Esophagus muscularis mucosa (tissue), 4 donors: ENCODE measurements at regions of chr9 and their contacts with region 1.

Region 1: GRCh38 chr9:14258660-14259239 is 55.2 kb downstream of the NFIB start:
- DNase-seq: no peak
- H3K4me3 ChIP-seq: no peak overlapping the region
- H3K27ac ChIP-seq: peak overlapping the region; percentile 13 to 73 (median 28)
- H3K4me1 ChIP-seq: peaks cover 41 to 62% (median 57%) of the 10 kb centered on the region in 4 donors
- H3K27me3 ChIP-seq: no peaks in the 10 kb centered on the region
- CTCF ChIP-seq: no peak
- EP300 ChIP-seq: no peak
- POLR2A ChIP-seq: no peak

Region 2: DNA sequence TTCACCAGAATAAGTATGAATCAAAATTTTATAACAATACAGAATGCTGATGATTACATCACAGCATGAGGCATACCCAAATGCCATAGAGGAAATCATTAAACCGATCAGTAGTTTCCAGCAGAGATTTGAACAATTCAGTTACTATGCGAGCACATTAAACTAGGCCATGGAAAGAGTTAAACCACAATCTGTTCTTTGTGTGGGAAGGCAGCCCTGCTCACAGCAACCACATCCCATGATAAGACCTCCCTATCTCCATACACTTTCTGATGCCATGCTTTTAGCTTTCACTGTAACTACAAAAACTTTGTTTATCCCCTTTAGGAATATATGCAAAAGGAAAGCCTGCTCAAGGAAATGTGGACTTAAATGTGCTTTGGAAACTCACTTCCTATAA is 50.7 kb after region 1 on chr9:
- intact Hi-C with region 1: loop called (anchors 5 kb)
- DNase-seq: no peak
- H3K4me3 ChIP-seq: peak overlapping the region; percentile 5 to 88 (median 80)
- H3K27ac ChIP-seq: peak overlapping the region in 1 of 4 donors; percentile 45
- H3K4me1 ChIP-seq: peaks cover 26 to 55% (median 37%) of the 10 kb centered on the region in 4 donors
- H3K27me3 ChIP-seq: no peaks in the 10 kb centered on the region
- CTCF ChIP-seq: no peak
- EP300 ChIP-seq: no peak
- POLR2A ChIP-seq: no peak

Region 3: GRCh38 chr9:14383294-14383693 is 124.5 kb after region 1 on chr9:
- intact Hi-C with region 1: no loop called
- DNase-seq: no peak
- H3K4me3 ChIP-seq: no peak overlapping the region
- H3K27ac ChIP-seq: no peak overlapping the region
- H3K4me1 ChIP-seq: no peaks in the 10 kb centered on the region
- H3K27me3 ChIP-seq: no peaks in the 10 kb centered on the region
- CTCF ChIP-seq: no peak
- EP300 ChIP-seq: no peak
- POLR2A ChIP-seq: no peak